ENCODE measurements at regions of chr14 and their contacts with region 1.

Region 1: DNA sequence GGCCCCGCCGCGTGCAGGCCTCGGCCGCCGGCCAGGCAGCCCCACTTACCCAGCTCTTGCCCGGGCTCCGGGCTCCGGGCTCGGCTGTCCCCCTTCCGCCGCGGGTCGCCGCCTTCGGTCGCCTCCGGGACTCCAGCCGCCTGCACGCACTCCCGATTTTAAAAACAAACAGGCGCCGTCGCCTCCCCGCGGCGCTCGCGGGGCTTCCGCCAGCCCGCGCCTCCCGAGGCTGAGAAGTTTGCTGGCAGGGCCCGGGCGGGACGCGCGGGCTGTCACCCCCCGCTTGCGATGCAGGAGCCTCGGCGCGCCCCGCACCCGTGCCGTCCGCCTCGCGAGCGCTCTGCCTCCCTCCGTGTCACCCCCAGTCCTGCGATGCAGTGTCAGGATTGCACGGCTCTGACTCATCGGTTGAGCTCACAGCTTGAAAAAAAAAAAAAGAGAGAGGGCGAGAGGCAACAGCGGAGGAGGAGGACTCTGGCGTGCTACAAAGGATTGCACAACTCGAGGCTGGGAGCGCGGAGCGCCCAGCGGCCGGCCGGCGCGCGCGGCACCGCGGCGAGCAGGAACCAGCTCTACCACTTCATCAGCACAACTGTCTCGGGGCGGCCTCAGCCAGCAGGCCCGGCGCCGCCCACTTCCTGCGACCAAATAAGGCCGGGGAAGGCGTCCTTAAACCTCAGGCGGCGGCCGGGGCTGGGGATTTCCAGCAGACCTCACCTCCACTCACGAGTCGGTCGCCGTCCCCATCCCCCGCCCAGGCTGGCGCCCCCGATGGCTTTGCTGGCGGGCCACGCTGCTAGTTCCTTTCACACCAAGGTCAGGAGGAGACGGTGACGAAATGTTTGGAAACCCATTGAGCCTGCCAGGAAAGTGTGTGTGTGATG is 45.8 kb upstream of the PNMA1 start:
- DNase-seq: peak; percentile 98
- ATAC-seq: peak; percentile 74
- H3K4me3 Mint-ChIP-seq: peak overlapping the region; percentile 83
- H3K27ac Mint-ChIP-seq: peak overlapping the region; percentile 99
- H3K4me1 Mint-ChIP-seq: peaks cover 76% of the 10 kb centered on the region
- H3K27me3 Mint-ChIP-seq: no peaks in the 10 kb centered on the region

Region 2: DNA sequence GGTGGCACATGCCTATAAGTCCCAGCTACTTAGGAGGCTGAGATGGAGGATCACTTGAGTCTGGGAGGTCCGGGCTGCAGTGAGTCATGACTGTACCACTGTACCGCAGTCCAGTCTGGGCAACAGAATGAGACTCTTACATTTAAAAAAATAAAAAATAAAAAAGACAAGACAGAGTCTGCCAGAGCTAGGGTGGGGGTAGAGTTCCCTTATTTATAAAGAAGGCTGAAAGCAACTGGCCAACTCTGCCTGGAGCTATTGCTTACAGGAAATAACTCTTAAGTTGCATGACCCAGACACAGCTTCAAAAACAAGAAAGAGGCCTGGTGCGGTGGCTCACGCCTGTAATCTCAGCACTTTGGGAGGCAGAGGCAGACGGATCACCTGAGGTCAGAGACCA is 333.1 kb before region 1 on chr14:
- CTCF ChIA-PET with region 1: no interaction called
- POLR2A ChIA-PET with region 1: no interaction called
- intact Hi-C with region 1: no loop called
- DNase-seq: no peak
- ATAC-seq: no peak
- H3K4me3 Mint-ChIP-seq: no peak overlapping the region
- H3K27ac Mint-ChIP-seq: no peak overlapping the region
- H3K4me1 Mint-ChIP-seq: peaks cover 10% of the 10 kb centered on the region
- H3K27me3 Mint-ChIP-seq: no peaks in the 10 kb centered on the region

Region 3: GRCh38 chr14:73463411-73463810 is 296.5 kb before region 1 on chr14:
- CTCF ChIA-PET with region 1: no interaction called
- POLR2A ChIA-PET with region 1: no interaction called
- intact Hi-C with region 1: loop called in 1 of 2 experiments (anchors 5 kb)
- DNase-seq: peak; percentile 73
- ATAC-seq: peak; percentile 56
- H3K4me3 Mint-ChIP-seq: peak overlapping the region; percentile 53
- H3K27ac Mint-ChIP-seq: peak overlapping the region; percentile 94
- H3K4me1 Mint-ChIP-seq: peaks cover 63% of the 10 kb centered on the region
- H3K27me3 Mint-ChIP-seq: no peaks in the 10 kb centered on the region

Region 4: GRCh38 chr14:73696466-73697400 is 63.2 kb before region 1 on chr14:
- CTCF ChIA-PET with region 1: interaction called, 4 read pairs
- POLR2A ChIA-PET with region 1: no interaction called
- intact Hi-C with region 1: loop called in 1 of 2 experiments (anchors 1 kb)
- DNase-seq: no peak
- ATAC-seq: peak; percentile 87
- H3K4me3 Mint-ChIP-seq: peak overlapping the region; percentile 46
- H3K27ac Mint-ChIP-seq: peak overlapping the region; percentile 92
- H3K4me1 Mint-ChIP-seq: peaks cover 50% of the 10 kb centered on the region
- H3K27me3 Mint-ChIP-seq: no peaks in the 10 kb centered on the region

Region 5: GRCh38 chr14:73728717-73729330 is 31.1 kb before region 1 on chr14:
- CTCF ChIA-PET with region 1: interaction called, 28 read pairs
- POLR2A ChIA-PET with region 1: interaction called, 8 read pairs
- intact Hi-C with region 1: loop called (anchors 1 to 2 kb)
- DNase-seq: peak; percentile 93
- ATAC-seq: peak; percentile 90
- H3K4me3 Mint-ChIP-seq: no peak overlapping the region
- H3K27ac Mint-ChIP-seq: peak overlapping the region; percentile 64
- H3K4me1 Mint-ChIP-seq: peaks cover 38% of the 10 kb centered on the region
- H3K27me3 Mint-ChIP-seq: no peaks in the 10 kb centered on the region

Region 6: DNA sequence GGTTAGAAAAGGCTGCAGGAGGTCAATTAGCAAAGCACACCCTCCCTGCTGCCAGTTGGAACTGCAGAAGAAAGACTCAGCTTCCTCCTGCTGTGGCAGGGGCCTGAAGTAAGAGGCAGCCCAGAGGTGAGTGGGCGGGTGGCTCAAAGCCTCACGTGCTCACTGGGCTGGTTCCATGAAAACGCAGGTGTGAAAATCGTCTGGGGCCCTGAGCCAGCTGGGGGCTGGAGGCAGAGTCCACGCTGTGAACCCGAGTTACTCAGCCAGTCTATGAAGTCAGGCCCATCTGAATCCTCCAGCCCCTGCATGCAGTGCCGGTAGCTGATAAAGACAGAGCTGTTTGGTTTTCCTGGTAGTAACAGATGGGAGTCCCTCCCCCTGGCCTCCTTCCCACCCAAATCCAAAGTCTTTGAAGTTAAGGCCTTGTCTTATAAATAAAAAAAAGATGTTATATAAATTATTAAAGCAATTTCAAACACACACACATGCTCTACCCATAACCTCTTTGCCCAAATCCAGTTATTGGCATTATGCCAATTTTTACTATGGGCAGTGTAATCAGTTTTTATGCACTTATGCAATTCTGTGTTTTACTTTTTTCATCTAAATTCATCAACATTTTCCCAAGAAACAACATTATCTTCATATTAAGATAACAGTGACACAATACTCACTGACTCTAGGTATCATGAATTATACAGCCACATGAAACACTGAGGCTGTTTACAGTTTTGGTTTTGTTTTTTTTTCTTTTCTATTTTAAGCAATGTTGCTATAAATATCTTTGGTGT is 12.1 kb after region 1 on chr14:
- CTCF ChIA-PET with region 1: interaction called, 20 read pairs
- POLR2A ChIA-PET with region 1: interaction called, 22 read pairs
- intact Hi-C with region 1: loop called (anchors 1 kb)
- DNase-seq: peak; percentile 90
- ATAC-seq: peak; percentile 80
- H3K4me3 Mint-ChIP-seq: peak overlapping the region; percentile 12
- H3K27ac Mint-ChIP-seq: peak overlapping the region; percentile 89
- H3K4me1 Mint-ChIP-seq: peaks cover 73% of the 10 kb centered on the region
- H3K27me3 Mint-ChIP-seq: no peaks in the 10 kb centered on the region

Region 7: GRCh38 chr14:73825551-73826188 is 65.7 kb after region 1 on chr14:
- CTCF ChIA-PET with region 1: interaction called, 21 read pairs
- POLR2A ChIA-PET with region 1: interaction called, 3 read pairs
- intact Hi-C with region 1: loop called in 1 of 2 experiments (anchors 2 kb)
- DNase-seq: peak; percentile 91
- ATAC-seq: peak; percentile 79
- H3K4me3 Mint-ChIP-seq: no peak overlapping the region
- H3K27ac Mint-ChIP-seq: no peak overlapping the region
- H3K4me1 Mint-ChIP-seq: peaks cover 18% of the 10 kb centered on the region
- H3K27me3 Mint-ChIP-seq: no peaks in the 10 kb centered on the region

Region 8: DNA sequence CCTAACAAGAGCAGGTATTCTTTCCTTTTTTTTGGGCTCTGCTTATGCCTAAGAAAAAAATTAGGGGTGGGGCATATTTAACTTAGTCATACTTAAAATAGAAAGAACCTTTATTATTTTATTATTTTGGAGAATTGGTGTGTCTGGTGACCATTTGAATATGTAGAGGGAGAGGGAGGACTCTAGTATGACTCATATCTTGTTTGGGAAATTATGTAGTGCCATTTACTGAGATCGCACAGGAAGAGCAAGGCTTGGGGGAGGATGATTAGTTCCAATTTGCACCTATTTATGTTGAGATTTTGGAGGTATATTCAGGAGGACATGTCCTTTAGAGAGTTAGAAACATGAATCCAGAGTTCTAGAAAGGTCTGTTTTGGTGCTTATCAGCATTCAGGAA is 136.6 kb after region 1 on chr14:
- CTCF ChIA-PET with region 1: no interaction called
- POLR2A ChIA-PET with region 1: no interaction called
- intact Hi-C with region 1: no loop called
- DNase-seq: no peak
- ATAC-seq: no peak
- H3K4me3 Mint-ChIP-seq: no peak overlapping the region
- H3K27ac Mint-ChIP-seq: peak overlapping the region; percentile 88
- H3K4me1 Mint-ChIP-seq: peaks cover 15% of the 10 kb centered on the region
- H3K27me3 Mint-ChIP-seq: no peaks in the 10 kb centered on the region

Region 9: DNA sequence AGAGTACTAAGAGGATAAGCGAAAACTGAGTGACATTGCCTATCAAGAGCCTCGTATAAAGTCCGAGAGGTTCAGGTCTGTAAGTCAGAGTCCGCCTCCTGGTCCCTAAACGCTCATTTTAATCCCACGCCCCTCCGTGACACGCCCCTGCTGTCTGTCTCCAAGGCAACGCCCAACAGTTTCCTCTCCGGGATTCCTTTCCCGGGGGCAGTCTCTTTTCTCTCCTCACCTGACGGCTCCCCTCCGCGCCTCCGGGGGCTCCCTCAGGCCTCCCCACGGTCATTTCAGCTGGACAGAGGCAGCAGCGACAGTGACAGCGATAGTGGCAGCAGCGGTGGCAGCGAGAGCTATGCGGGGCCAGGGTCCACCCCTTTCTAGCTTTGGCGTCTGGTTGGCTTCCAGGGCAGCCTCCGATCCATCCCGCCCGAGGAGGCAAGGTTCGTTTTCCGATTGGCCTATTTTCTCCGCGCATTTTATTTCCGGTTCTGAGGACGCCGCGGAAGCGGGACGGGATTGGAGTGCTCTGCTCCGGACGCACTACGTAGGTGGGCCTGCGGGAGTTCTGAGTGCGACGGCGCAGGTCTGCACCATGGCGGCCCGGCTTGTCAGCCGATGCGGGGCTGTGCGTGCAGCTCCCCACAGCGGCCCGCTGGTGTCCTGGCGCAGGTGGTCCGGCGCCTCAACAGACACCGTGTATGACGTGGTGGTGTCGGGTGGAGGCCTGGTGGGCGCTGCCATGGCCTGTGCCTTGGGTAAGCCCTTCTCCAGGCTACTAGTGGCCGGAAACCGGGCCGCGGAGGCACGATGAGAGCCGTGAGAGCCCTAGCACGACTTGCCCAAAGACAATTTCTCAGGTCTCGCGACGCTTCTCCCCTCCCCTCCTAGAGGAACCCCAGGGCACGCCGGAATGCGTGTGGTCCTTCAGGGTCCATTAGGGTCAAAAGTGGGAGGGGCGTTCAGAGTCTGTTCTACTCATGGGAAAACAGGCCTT is 190.1 kb after region 1 on chr14 and contains the starts of genes COQ6 and FAM161B:
- CTCF ChIA-PET with region 1: no interaction called
- POLR2A ChIA-PET with region 1: no interaction called
- intact Hi-C with region 1: loop called in 1 of 2 experiments (anchors 1 kb)
- DNase-seq: peak; percentile 95
- ATAC-seq: peak; percentile 96
- H3K4me3 Mint-ChIP-seq: peak within 1 kb of the TSS; percentile 91
- H3K27ac Mint-ChIP-seq: peak within 1 kb of the TSS; percentile 88
- H3K4me1 Mint-ChIP-seq: peaks cover 14% of the 10 kb centered on the region
- H3K27me3 Mint-ChIP-seq: no peaks in the 10 kb centered on the region
- total RNA-seq, gene COQ6: 14.1 to 17.0 TPM
- total RNA-seq, gene FAM161B: 1.2 to 1.4 TPM

Region 10: DNA sequence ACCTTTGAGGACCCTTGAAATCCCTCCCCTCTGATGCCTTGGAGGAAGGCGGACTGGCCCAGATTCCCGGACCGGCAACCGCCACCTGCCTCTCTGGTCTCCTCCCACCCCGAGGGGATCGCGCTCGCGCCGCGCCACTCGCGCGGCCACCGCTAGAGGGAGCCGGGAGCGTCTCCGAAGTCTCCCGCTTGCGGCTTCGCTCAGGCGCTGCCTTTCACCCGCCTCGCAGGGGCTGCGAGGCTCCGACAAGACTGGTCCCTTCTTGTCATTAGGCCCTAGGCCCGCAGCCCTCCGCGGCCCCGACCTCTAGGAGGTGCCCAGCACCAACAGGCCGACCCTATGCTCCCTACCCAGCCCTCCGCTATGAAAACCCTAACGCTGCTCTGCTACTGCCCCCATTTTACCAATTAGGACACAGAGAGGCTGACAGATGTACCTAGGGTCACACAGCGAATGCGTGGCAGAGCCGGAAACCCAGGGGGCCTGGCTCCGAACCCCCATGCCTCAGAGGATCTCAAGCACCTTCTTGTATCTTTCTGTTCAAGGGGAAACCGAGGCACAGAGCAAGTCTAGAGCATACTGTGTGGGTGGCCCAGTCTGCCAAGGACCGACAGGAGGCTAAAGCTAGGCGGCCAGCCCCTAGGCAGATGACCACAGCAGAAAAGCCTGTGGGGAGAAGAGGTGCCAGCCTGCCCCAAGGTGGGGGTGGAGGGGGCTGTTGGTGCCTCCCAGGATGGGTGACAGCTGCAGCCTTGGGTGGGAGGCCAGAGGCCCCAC is 457.9 kb after region 1 on chr14:
- CTCF ChIA-PET with region 1: no interaction called
- POLR2A ChIA-PET with region 1: no interaction called
- intact Hi-C with region 1: no loop called
- DNase-seq: peak; percentile 87
- ATAC-seq: peak; percentile 98
- H3K4me3 Mint-ChIP-seq: no peak overlapping the region
- H3K27ac Mint-ChIP-seq: no peak overlapping the region
- H3K4me1 Mint-ChIP-seq: peaks cover 3% of the 10 kb centered on the region
- H3K27me3 Mint-ChIP-seq: peaks cover 7% of the 10 kb centered on the region

Region 11: GRCh38 chr14:74671789-74672188 is 911.8 kb after region 1 on chr14:
- CTCF ChIA-PET with region 1: no interaction called
- POLR2A ChIA-PET with region 1: no interaction called
- intact Hi-C with region 1: no loop called
- DNase-seq: no peak
- ATAC-seq: no peak
- H3K4me3 Mint-ChIP-seq: no peak overlapping the region
- H3K27ac Mint-ChIP-seq: no peak overlapping the region
- H3K4me1 Mint-ChIP-seq: peaks cover 13% of the 10 kb centered on the region
- H3K27me3 Mint-ChIP-seq: no peaks in the 10 kb centered on the region